Ovary (tissue), 10 donors: ENCODE measurements at regions of chr3 and their contacts with region 1.

Region 1: GRCh38 chr3:14947886-14948555 is 638 bp downstream of the NR2C2 start:
- DNase-seq: peak; percentile 97 to 98 (median 98)
- H3K4me3 ChIP-seq: peak overlapping the region; percentile 82
- H3K27ac ChIP-seq: peak overlapping the region; percentile 99 to 100
- H3K4me1 ChIP-seq: peaks cover 6% of the 10 kb centered on the region
- H3K27me3 ChIP-seq: no peaks in the 10 kb centered on the region
- CTCF ChIP-seq: no peak
- EP300 ChIP-seq: no peak
- POLR2A ChIP-seq: peak; percentile 17

Region 2: GRCh38 chr3:14178247-14179113 is 769.5 kb before region 1 on chr3 and contains the starts of genes LSM3 and XPC:
- intact Hi-C with region 1: loop called in 1 of 4 experiments (anchors 10 kb)
- DNase-seq: peak; percentile 97 to 99 (median 98)
- H3K4me3 ChIP-seq: peak within 1 kb of the TSS; percentile 97
- H3K27ac ChIP-seq: peak within 1 kb of the TSS; percentile 92 to 96
- H3K4me1 ChIP-seq: peaks cover 11% of the 10 kb centered on the region
- H3K27me3 ChIP-seq: no peaks in the 10 kb centered on the region
- CTCF ChIP-seq: peak in 1 of 3 donors; percentile 21
- EP300 ChIP-seq: peak; percentile 27
- POLR2A ChIP-seq: peak; percentile 98
- total RNA-seq, gene LSM3: 7.9 to 12.0 (median 9.7) TPM
- total RNA-seq, gene XPC: 38.7 to 50.8 (median 40.6) TPM

Region 3: GRCh38 chr3:14806641-14807263 is 141.3 kb before region 1 on chr3:
- intact Hi-C with region 1: no loop called
- DNase-seq: no peak
- H3K4me3 ChIP-seq: no peak overlapping the region
- H3K27ac ChIP-seq: no peak overlapping the region
- H3K4me1 ChIP-seq: peaks cover 3% of the 10 kb centered on the region
- H3K27me3 ChIP-seq: no peaks in the 10 kb centered on the region
- CTCF ChIP-seq: no peak
- EP300 ChIP-seq: no peak
- POLR2A ChIP-seq: no peak

Region 4: GRCh38 chr3:15092686-15093085 is 144.7 kb after region 1 on chr3:
- intact Hi-C with region 1: no loop called
- DNase-seq: no peak
- H3K4me3 ChIP-seq: no peak overlapping the region
- H3K27ac ChIP-seq: no peak overlapping the region
- H3K4me1 ChIP-seq: peaks cover 3% of the 10 kb centered on the region
- H3K27me3 ChIP-seq: no peaks in the 10 kb centered on the region
- CTCF ChIP-seq: no peak
- EP300 ChIP-seq: no peak
- POLR2A ChIP-seq: no peak